Caco-2 (cell line): ENCODE measurements at regions of chr5 and their contacts with region 1.

Region 1: DNA sequence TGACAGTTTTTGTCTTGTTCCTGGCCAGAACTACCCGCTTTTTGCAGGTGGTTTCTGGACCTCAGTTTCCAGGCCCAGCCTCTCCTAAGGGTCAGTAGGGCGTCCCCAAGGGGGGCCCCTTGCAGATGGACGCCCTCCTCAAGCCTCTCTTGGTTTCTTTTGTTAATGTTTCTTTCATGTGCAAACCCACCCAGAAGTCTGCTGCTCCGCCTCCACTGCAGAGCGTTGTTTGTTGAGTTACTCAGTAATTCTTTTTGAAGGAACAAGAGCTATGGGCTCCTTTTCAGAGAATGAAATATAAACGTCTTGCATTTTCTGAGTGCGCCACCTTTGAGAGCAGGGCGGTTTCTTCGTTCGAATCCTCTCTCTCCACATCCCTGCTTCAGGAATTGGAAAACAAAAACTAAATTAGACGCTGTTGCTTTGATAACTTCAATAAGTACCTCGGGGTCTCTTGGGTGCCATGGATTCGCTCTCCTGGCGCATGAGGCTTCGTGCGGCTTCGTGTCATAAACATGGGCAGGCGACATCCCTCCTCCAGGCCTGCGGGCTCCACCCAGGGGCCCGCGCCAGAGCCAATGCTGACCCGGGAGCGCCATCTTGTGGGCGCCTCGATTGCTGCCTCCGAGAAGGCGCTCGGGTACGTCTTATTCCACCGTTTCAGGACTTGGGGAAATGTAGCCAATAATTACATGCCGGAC is 38.3 kb upstream of the CKMT2 start:
- DNase-seq: peak; percentile 82 to 88
- H3K4me3 ChIP-seq: no peak overlapping the region
- H3K4me3 Mint-ChIP-seq: peak overlapping the region; percentile 59
- H3K27ac Mint-ChIP-seq: no peak overlapping the region
- H3K4me1 ChIP-seq: no peaks in the 10 kb centered on the region; the same call in 1 of the 2 replicates
- H3K4me1 Mint-ChIP-seq: peaks cover 10% of the 10 kb centered on the region
- H3K27me3 ChIP-seq: no peaks in the 10 kb centered on the region
- H3K27me3 Mint-ChIP-seq: no peaks in the 10 kb centered on the region
- CTCF ChIP-seq: peak; percentile 85 to 92

Region 2: GRCh38 chr5:80686757-80687156 is 508.0 kb before region 1 on chr5:
- CTCF ChIA-PET with region 1: no interaction called
- POLR2A ChIA-PET with region 1: no interaction called
- intact Hi-C with region 1: loop called (anchors 5 kb)
- DNase-seq: no peak
- H3K4me3 ChIP-seq: no peak overlapping the region
- H3K4me3 Mint-ChIP-seq: no peak overlapping the region
- H3K27ac Mint-ChIP-seq: no peak overlapping the region
- H3K4me1 ChIP-seq: no peaks in the 10 kb centered on the region
- H3K4me1 Mint-ChIP-seq: no peaks in the 10 kb centered on the region
- H3K27me3 ChIP-seq: no peaks in the 10 kb centered on the region
- H3K27me3 Mint-ChIP-seq: no peaks in the 10 kb centered on the region
- CTCF ChIP-seq: peak; percentile 33 to 34

Region 3: GRCh38 chr5:80711938-80712337 is 482.8 kb before region 1 on chr5:
- CTCF ChIA-PET with region 1: no interaction called
- POLR2A ChIA-PET with region 1: no interaction called
- intact Hi-C with region 1: loop called (anchors 5 kb)
- DNase-seq: peak; percentile 59 to 62
- H3K4me3 ChIP-seq: no peak overlapping the region
- H3K4me3 Mint-ChIP-seq: no peak overlapping the region
- H3K27ac Mint-ChIP-seq: no peak overlapping the region
- H3K4me1 ChIP-seq: peaks cover 4% of the 10 kb centered on the region; the same call in 1 of the 2 replicates
- H3K4me1 Mint-ChIP-seq: no peaks in the 10 kb centered on the region
- H3K27me3 ChIP-seq: no peaks in the 10 kb centered on the region
- H3K27me3 Mint-ChIP-seq: no peaks in the 10 kb centered on the region
- CTCF ChIP-seq: peak; percentile 57 to 60